ENCODE measurements at regions of chr1 and their contacts with region 1.

Region 1: GRCh38 chr1:165836664-165837482 is 9.5 kb downstream of the UCK2 start:
- DNase-seq: no peak
- H3K4me3 ChIP-seq: no peak overlapping the region
- H3K27ac ChIP-seq: no peak overlapping the region
- H3K4me1 ChIP-seq: peaks cover 4 to 22% of the 10 kb centered on the region in 2 donors
- H3K27me3 ChIP-seq: no peaks in the 10 kb centered on the region
- CTCF ChIP-seq: no peak
- POLR2A ChIP-seq: no peak

Region 2: GRCh38 chr1:165884690-165885304 is 47.9 kb after region 1 on chr1:
- intact Hi-C with region 1: loop called in 1 of 2 experiments (anchors 10 kb)
- DNase-seq: no peak
- H3K4me3 ChIP-seq: no peak overlapping the region
- H3K27ac ChIP-seq: peak overlapping the region in 1 of 5 donors; percentile 64
- H3K4me1 ChIP-seq: peaks cover 8 to 12% of the 10 kb centered on the region in 2 donors
- H3K27me3 ChIP-seq: no peaks in the 10 kb centered on the region
- CTCF ChIP-seq: no peak
- POLR2A ChIP-seq: no peak

Region 3: DNA sequence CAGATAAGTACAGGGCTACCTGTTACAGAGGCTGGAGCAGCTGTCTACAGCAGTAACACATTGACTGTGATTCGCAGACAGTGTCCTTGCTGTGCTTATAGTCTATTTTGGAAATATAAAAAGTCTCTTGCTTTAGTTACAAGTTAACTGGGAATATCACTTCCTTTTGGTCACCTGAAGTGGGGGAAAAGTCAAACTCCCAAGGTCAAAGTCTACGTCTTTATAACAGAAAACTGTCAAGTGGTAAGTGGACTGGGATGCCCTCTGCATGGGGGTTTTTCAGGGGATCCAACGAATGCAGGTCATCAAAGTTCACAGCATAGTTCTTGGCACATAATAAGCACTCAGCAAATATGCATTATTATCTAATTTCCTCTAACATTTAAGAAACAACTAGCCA is 274.6 kb after region 1 on chr1:
- intact Hi-C with region 1: no loop called
- DNase-seq: no peak
- H3K4me3 ChIP-seq: no peak overlapping the region
- H3K27ac ChIP-seq: no peak overlapping the region
- H3K4me1 ChIP-seq: no peaks in the 10 kb centered on the region
- H3K27me3 ChIP-seq: no peaks in the 10 kb centered on the region
- CTCF ChIP-seq: no peak
- POLR2A ChIP-seq: no peak

Region 4: GRCh38 chr1:166145499-166145898 is 308.6 kb after region 1 on chr1:
- intact Hi-C with region 1: no loop called
- DNase-seq: no peak
- H3K4me3 ChIP-seq: no peak overlapping the region
- H3K27ac ChIP-seq: no peak overlapping the region
- H3K4me1 ChIP-seq: no peaks in the 10 kb centered on the region
- H3K27me3 ChIP-seq: no peaks in the 10 kb centered on the region
- CTCF ChIP-seq: no peak
- POLR2A ChIP-seq: no peak